RWPE1 (cell line): ENCODE measurements at regions of chr11 and their contacts with region 1.

Region 1: DNA sequence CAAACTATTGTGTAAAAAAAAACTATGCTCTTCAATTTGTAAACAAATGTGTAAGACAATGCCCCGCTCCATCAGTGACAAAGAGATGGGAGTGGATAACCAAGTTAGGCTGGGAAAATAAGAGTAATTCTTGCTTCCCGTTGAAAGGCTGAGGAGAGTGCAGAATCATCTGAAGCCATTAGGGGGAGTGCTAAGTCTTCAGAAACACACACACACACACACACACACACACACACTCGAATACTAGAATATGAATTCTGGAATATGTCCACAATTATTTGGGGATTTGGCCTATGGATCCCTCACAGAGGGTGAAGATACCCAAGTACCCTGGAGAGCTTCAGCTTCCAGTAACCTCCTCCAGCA is 27.8 kb upstream of the ROBO3 start:
- DNase-seq: peak; percentile 73
- H3K27ac ChIP-seq: no peak overlapping the region
- CTCF ChIP-seq: peak; percentile 58

Region 2: GRCh38 chr11:124669193-124669592 is 168.3 kb before region 1 on chr11:
- CTCF ChIA-PET with region 1: interaction called, 14 read pairs
- POLR2A ChIA-PET with region 1: no interaction called
- DNase-seq: peak; percentile 71
- H3K27ac ChIP-seq: no peak overlapping the region
- CTCF ChIP-seq: peak; percentile 86